Panc1 (cell line): ENCODE measurements at regions of chr12 and their contacts with region 1.

Region 1: DNA sequence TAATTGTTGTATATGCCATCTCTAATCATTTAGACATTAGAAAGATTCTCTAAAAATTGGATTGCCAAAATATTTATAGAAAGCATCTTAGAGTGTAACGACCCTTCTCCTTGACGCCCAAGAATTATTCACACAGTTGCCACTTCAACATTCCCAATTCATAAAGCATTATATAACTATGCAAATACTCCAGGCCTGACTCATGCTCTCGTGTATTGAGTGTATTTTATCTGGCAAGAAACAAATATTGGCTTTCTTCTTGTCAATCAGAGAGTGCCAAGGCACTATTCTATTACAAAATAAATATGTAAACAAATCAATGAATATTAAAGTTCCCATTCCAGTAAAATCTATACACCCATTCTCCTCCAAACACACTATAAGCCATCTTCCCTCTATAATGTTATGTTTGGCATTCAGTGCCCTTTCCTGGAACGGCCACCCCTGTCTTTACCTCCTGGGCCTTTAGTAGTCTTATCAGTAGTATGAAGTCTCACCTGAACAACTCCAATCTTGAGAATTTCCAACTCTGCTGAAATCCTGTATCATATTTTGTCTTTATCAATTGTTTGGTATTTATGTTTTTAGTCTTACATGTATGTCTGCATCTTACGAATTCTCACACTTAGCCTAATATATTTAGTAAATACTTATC is 182.6 kb downstream of the PIK3C2G start:
- DNase-seq: no peak
- ATAC-seq: no peak
- H3K4me3 ChIP-seq: no peak overlapping the region
- H3K27ac ChIP-seq: no peak overlapping the region
- H3K4me1 ChIP-seq: no peaks in the 10 kb centered on the region
- H3K27me3 ChIP-seq: no peaks in the 10 kb centered on the region
- CTCF ChIP-seq: no peak

Region 2: DNA sequence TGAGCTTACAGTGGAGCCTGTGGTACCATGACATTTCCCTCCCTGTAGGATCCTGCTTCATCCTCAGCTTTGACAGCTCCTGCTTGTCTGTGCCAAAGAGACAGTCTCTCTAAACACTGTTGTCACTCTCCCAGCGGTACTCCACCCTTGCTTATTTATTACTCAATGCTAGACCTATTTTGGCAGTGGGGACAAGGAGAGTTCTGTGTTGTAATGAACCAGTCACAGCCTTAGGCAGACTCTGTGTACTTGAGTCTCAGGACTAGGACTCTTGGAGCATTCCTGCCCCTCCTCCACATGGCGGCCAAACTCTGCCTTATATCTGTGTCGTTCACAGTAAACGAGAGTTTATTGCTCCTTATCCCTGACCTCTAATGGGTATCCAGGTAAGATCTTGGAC is 111.7 kb before region 1 on chr12:
- CTCF ChIA-PET with region 1: no interaction called
- POLR2A ChIA-PET with region 1: no interaction called
- in situ Hi-C with region 1: no loop called
- intact Hi-C with region 1: loop called (anchors 1 kb)
- DNase-seq: no peak
- ATAC-seq: no peak
- H3K4me3 ChIP-seq: no peak overlapping the region
- H3K27ac ChIP-seq: no peak overlapping the region
- H3K4me1 ChIP-seq: no peaks in the 10 kb centered on the region
- H3K27me3 ChIP-seq: no peaks in the 10 kb centered on the region
- CTCF ChIP-seq: no peak

Region 3: DNA sequence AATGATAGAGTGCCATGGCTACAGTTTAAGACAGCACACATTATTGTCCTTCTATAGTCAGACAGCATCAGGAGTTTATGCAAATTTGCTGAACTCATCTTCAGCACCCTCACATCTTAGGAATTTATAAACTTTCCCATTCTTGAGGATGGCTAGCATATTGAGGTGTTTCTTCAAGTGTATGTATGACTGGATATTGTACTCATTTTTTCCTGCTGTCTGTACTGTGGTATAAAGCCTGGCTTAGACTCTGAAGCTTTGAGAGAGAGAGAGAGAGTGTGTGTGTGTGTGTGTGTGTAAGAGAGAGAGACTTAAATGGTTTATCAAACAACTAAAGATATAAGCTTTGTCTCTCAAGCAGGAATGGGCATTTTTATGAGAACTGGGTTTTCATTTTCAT is 21.0 kb before region 1 on chr12:
- CTCF ChIA-PET with region 1: no interaction called
- POLR2A ChIA-PET with region 1: no interaction called
- in situ Hi-C with region 1: no loop called
- intact Hi-C with region 1: no loop called
- DNase-seq: no peak
- ATAC-seq: no peak
- H3K4me3 ChIP-seq: no peak overlapping the region
- H3K27ac ChIP-seq: no peak overlapping the region
- H3K4me1 ChIP-seq: no peaks in the 10 kb centered on the region
- H3K27me3 ChIP-seq: no peaks in the 10 kb centered on the region
- CTCF ChIP-seq: no peak

Region 4: DNA sequence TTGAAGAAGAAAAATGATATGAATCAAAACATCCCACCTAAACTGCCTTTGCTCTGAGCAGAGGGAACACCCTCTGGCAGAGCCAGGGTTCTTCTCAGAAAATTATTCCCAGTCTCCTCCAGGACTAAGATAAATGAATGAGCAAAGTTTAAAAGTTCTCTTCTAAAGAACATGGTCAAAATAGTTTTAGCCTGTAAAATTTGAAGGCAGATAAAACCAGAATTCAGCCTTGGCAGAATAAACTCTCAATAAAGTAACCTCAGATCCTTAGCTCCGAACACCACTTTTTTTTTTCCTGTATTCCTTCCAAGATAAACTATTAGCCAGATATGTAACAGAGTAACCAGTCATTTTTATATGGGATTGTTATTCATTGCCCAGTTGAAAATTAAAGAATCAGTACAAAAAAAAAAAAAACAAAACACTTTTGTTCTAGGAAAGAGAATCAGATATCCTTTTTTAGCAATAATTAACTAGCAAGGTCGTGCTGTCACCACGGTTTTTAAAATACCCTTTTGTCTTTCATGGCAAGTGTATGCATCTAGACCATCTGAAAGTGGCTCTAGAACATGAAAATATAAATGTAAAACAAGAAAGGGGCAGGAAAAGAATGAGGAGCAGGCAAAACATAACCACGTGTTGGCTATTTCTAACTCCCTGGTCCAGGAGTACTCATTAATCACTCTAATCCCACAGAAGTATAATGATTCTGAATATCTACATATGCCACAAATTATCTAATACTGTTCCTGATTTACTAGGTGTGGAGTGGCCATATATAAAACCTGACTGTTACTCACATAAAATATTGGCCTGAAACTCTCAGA is 354.8 kb after region 1 on chr12:
- CTCF ChIA-PET with region 1: no interaction called
- POLR2A ChIA-PET with region 1: no interaction called
- in situ Hi-C with region 1: no loop called
- intact Hi-C with region 1: no loop called
- DNase-seq: no peak
- ATAC-seq: no peak
- H3K4me3 ChIP-seq: no peak overlapping the region
- H3K27ac ChIP-seq: no peak overlapping the region
- H3K4me1 ChIP-seq: no peaks in the 10 kb centered on the region
- H3K27me3 ChIP-seq: no peaks in the 10 kb centered on the region
- CTCF ChIP-seq: no peak